Activated T-helper 1 cell treated with anti-CD3 and anti-CD28 coated beads, Interleukin-12 subunit alpha, Interleukin-12 subunit beta, Interleukin-2, Interleukin-4 antibody, amounts not matched to agents 30 ng/mL and 10 ng/mL and 1 ng/mL, durations not matched to agents 14 hours and 24 hours and 36 hours (primary cell): ENCODE measurements at regions of chr1 and their contacts with region 1.

Region 1: DNA sequence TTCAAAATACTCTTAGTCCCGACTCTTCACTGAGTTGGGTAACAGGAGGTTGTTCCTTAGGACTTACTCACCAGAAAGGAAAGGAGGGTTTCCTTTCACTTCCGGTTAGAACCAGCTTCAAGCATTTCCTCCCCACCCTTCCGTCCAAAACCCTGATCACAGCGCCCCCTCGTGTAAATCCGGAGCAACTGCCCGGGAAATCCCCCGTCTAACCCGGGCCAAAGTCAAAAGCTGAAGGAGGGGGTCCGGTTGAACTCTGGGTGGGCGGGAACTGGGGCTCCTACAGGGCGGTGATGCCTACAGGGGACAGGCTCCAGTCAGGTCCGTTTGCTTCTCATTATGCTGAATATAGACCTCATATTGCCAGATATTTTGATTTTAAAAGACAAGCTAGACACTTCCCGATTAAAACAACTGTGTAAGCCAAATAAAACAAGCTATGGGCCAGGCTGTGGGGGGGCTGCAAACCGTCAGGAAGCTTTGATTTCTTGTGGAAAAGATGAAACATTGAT is 15.0 kb upstream of the MTARC2 start:
- DNase-seq: peak; percentile 63
- H3K4me3 Mint-ChIP-seq: no peak overlapping the region
- H3K27ac Mint-ChIP-seq: no peak overlapping the region
- H3K4me1 Mint-ChIP-seq: peaks cover 11% of the 10 kb centered on the region
- H3K27me3 Mint-ChIP-seq: peaks cover 12% of the 10 kb centered on the region

Region 2: GRCh38 chr1:220189750-220190347 is 543.3 kb before region 1 on chr1:
- intact Hi-C with region 1: loop called (anchors 5 kb)
- DNase-seq: no peak
- H3K4me3 Mint-ChIP-seq: no peak overlapping the region
- H3K27ac Mint-ChIP-seq: no peak overlapping the region
- H3K4me1 Mint-ChIP-seq: no peaks in the 10 kb centered on the region
- H3K27me3 Mint-ChIP-seq: no peaks in the 10 kb centered on the region

Region 3: GRCh38 chr1:220398238-220398637 is 334.9 kb before region 1 on chr1:
- intact Hi-C with region 1: no loop called
- DNase-seq: no peak
- H3K4me3 Mint-ChIP-seq: no peak overlapping the region
- H3K27ac Mint-ChIP-seq: no peak overlapping the region
- H3K4me1 Mint-ChIP-seq: no peaks in the 10 kb centered on the region
- H3K27me3 Mint-ChIP-seq: peaks cover 16% of the 10 kb centered on the region

Region 4: DNA sequence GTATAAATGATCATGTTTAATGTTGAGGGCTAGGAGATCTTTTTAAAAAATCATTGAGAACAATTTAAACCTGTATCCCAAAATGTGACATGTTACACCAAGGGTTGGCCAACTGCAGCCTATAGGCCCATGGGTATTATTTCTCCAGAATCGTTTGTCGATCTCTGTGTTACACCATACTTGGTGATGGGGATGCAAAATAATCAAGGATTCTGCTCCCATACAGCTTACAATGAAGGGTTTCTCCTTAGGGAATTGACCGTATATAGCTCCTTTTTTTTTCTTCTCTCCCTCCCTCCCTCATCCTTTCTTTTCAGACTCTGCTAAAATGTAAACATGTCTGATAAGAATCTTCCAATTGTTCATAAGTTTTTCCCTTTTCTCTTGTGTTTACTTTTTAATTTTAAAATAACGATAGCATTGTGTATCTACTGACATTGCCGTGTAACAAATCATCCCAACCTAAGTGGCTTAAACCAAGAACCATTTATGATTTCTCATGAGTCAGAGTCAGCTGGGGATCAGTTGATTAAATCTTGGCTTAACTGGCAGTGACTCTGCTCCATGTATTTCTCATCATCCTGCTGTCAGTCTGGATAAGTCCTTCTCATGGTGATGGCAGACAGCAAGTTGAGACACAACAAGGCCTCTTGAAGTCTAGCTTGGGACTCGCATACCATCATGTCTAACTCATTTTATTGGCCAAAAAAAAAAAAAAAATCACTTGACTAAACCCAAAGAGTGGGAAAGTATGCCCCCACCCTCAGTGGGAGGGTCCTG is 157.2 kb before region 1 on chr1:
- intact Hi-C with region 1: no loop called
- DNase-seq: no peak
- H3K4me3 Mint-ChIP-seq: no peak overlapping the region
- H3K27ac Mint-ChIP-seq: no peak overlapping the region
- H3K4me1 Mint-ChIP-seq: no peaks in the 10 kb centered on the region
- H3K27me3 Mint-ChIP-seq: no peaks in the 10 kb centered on the region

Region 5: GRCh38 chr1:220690140-220691025 is 42.8 kb before region 1 on chr1 and contains the start of gene C1orf115:
- intact Hi-C with region 1: loop called (anchors 1 kb)
- DNase-seq: peak; percentile 63
- H3K4me3 Mint-ChIP-seq: peak within 1 kb of the TSS; percentile 84
- H3K27ac Mint-ChIP-seq: no peak within 1 kb of the TSS
- H3K4me1 Mint-ChIP-seq: peaks cover 7% of the 10 kb centered on the region
- H3K27me3 Mint-ChIP-seq: peaks cover 26% of the 10 kb centered on the region
- total RNA-seq, gene C1orf115: 0.05 TPM in 1 of 2 replicates, not detected in the other